Activated B cell treated with CpG ODN at 0.5 μM for 24 hours (primary cell): ENCODE measurements at regions of chr1 and their contacts with region 1.

Region 1: GRCh38 chr1:23484253-23485001 is 448 bp upstream of the ASAP3 start:
- DNase-seq: peak; percentile 81
- ATAC-seq: peak; percentile 88
- H3K4me3 Mint-ChIP-seq: peak overlapping the region; percentile 91
- H3K27ac Mint-ChIP-seq: peak overlapping the region; percentile 75
- H3K4me1 Mint-ChIP-seq: peaks cover 33% of the 10 kb centered on the region
- H3K27me3 Mint-ChIP-seq: peaks cover 4% of the 10 kb centered on the region
- CTCF ChIP-seq: no peak

Region 2: DNA sequence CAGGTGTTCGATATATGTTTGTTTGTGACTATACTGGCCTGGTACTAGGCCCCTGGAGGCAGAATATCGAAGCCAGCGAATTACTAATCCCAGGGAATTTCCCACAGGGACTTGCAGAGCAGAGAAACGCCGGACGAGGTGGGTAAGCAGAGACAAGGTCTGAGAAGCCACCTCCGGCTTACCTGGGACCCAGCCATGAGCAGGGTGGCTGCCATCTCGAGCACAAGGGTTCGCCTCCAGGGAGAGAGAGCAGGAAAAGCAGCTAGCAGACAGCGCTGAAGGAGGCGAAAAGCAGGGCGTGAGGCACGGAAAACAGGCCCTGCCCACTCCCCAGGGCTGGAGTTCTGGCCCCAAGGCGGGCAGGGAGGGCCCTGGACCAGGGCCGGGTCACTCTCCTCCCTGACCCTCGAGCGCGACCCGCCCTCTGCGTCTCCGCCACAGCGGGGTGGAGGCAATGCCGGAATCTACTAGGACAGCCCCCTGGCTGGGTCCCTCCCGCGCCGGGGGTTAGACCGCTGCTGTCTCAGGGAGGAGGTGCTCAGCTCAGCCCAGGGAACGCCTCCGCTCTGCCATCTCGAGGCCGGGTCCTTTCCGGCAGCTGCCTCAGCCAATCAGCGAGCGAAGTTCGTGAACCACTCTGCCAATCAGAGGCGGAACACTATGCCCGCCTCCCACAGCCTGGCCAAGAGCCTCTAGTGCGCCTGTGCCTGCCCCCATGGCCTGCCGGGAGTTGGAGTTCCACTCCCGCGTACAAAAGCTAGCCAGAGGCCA is 116.5 kb before region 1 on chr1:
- CTCF ChIA-PET with region 1: no interaction called
- POLR2A ChIA-PET with region 1: interaction called, 3 read pairs
- intact Hi-C with region 1: loop called (anchors 1 kb)
- DNase-seq: peak; percentile 88
- ATAC-seq: peak; percentile 88
- H3K4me3 Mint-ChIP-seq: peak overlapping the region; percentile 97
- H3K27ac Mint-ChIP-seq: peak overlapping the region; percentile 97
- H3K4me1 Mint-ChIP-seq: peaks cover 26% of the 10 kb centered on the region
- H3K27me3 Mint-ChIP-seq: no peaks in the 10 kb centered on the region
- CTCF ChIP-seq: no peak

Region 3: GRCh38 chr1:23530747-23531561 is 46.5 kb after region 1 on chr1 and contains the start of gene E2F2:
- CTCF ChIA-PET with region 1: interaction called, 3 read pairs
- POLR2A ChIA-PET with region 1: interaction called, 3 read pairs
- intact Hi-C with region 1: loop called (anchors 1 kb)
- DNase-seq: peak; percentile 68
- ATAC-seq: peak; percentile 73
- H3K4me3 Mint-ChIP-seq: peak within 1 kb of the TSS; percentile 87
- H3K27ac Mint-ChIP-seq: peak within 1 kb of the TSS; percentile 70
- H3K4me1 Mint-ChIP-seq: peaks cover 86% of the 10 kb centered on the region
- H3K27me3 Mint-ChIP-seq: no peaks in the 10 kb centered on the region
- CTCF ChIP-seq: no peak
- total RNA-seq, gene E2F2: 2.4 and 3.4 TPM in 2 replicates

Region 4: DNA sequence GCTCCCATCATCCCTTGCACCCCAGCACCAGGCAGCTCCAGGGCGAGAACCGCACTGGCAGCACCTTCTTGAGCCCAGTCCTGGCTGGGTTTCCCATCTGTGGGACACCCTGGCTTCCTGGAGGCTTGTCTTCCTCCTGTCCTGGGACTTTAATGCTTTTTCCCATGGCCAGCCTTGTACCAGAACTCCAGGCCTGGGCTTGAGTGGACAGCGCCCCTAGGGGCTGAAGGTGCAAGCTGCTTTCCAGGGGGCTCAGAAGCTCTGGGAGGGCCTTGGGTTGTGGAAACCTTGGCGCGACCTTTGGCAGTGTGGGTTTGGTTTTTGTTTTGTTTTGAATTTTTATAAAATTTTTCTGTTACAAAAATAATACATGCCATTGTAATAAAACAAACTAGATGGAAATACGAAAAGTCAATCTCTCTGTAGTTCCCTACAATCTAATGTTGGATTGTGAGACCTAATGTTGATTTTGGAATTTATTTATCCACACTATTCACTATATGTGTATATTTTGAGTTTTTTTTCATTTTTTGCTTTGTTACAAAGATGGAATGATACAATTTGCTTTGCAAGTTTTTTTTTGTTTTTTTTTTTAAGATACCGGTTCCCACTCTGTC is 173.3 kb after region 1 on chr1:
- CTCF ChIA-PET with region 1: no interaction called
- POLR2A ChIA-PET with region 1: no interaction called
- intact Hi-C with region 1: no loop called
- DNase-seq: peak; percentile 32
- ATAC-seq: peak; percentile 68
- H3K4me3 Mint-ChIP-seq: no peak overlapping the region
- H3K27ac Mint-ChIP-seq: no peak overlapping the region
- H3K4me1 Mint-ChIP-seq: no peaks in the 10 kb centered on the region
- H3K27me3 Mint-ChIP-seq: peaks cover 3% of the 10 kb centered on the region
- CTCF ChIP-seq: no peak